ENCODE measurements at regions of chr14 and their contacts with region 1.

Region 1: DNA sequence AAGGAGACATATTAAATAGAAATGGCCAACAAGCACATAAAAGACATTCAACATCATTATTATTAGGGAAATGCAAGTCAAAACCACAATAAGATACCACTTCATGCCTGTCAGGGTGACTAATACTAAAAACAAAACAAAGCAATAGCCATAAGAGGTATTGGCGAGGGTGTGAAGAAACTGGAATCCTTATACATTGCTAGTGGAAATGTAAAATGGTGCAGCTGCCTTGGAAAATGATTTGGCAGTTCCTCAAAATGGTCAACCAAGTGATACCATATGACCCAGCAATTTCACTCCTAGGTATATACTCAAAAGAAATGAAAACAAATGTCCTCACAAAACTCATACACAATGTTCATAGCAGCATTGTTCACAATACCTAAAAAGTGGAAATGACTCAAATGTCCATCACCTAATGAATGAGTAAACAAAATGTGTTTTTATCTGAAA is 27.0 kb downstream of the GPR135 start:
- DNase-seq: no peak
- ATAC-seq: peak; percentile 50
- H3K4me3 ChIP-seq: no peak overlapping the region
- H3K27ac ChIP-seq: no peak overlapping the region
- H3K4me1 ChIP-seq: no peaks in the 10 kb centered on the region
- H3K27me3 ChIP-seq: no peaks in the 10 kb centered on the region
- CTCF ChIP-seq: no peak
- EP300 ChIP-seq: no peak
- POLR2A ChIP-seq: no peak
- RAD21 ChIP-seq: no peak

Region 2: GRCh38 chr14:58690801-58691516 is 747.3 kb before region 1 on chr14:
- CTCF ChIA-PET with region 1: no interaction called
- POLR2A ChIA-PET with region 1: no interaction called
- RAD21 ChIA-PET with region 1: no interaction called
- SMC1A ChIA-PET with region 1: no interaction called
- in situ Hi-C with region 1: no loop called
- intact Hi-C with region 1: no loop called
- DNase-seq: no peak
- ATAC-seq: no peak
- H3K4me3 ChIP-seq: no peak overlapping the region
- H3K27ac ChIP-seq: no peak overlapping the region
- H3K4me1 ChIP-seq: no peaks in the 10 kb centered on the region
- H3K27me3 ChIP-seq: no peaks in the 10 kb centered on the region
- CTCF ChIP-seq: no peak
- EP300 ChIP-seq: no peak
- POLR2A ChIP-seq: no peak
- RAD21 ChIP-seq: no peak

Region 3: GRCh38 chr14:59116984-59117415 is 321.2 kb before region 1 on chr14:
- CTCF ChIA-PET with region 1: interaction called, 17 read pairs
- POLR2A ChIA-PET with region 1: no interaction called
- RAD21 ChIA-PET with region 1: interaction called, 3 read pairs
- SMC1A ChIA-PET with region 1: interaction called, 104 read pairs
- in situ Hi-C with region 1: no loop called
- intact Hi-C with region 1: no loop called
- DNase-seq: peak; percentile 44
- ATAC-seq: peak; percentile 95
- H3K4me3 ChIP-seq: no peak overlapping the region
- H3K27ac ChIP-seq: no peak overlapping the region
- H3K4me1 ChIP-seq: no peaks in the 10 kb centered on the region
- H3K27me3 ChIP-seq: no peaks in the 10 kb centered on the region; a peak in 1 of 4 replicates
- CTCF ChIP-seq: no peak
- EP300 ChIP-seq: peak; percentile 18 to 79; a peak in 3 of 4 replicates
- POLR2A ChIP-seq: no peak
- RAD21 ChIP-seq: no peak

Region 4: GRCh38 chr14:59132796-59133494 is 305.3 kb before region 1 on chr14:
- CTCF ChIA-PET with region 1: interaction called, 58 read pairs
- POLR2A ChIA-PET with region 1: interaction called, 3 read pairs
- RAD21 ChIA-PET with region 1: interaction called, 52 read pairs
- SMC1A ChIA-PET with region 1: interaction called, 55 read pairs
- in situ Hi-C with region 1: loop called (anchors 5 kb)
- intact Hi-C with region 1: no loop called
- DNase-seq: no peak
- ATAC-seq: no peak
- H3K4me3 ChIP-seq: no peak overlapping the region
- H3K27ac ChIP-seq: no peak overlapping the region
- H3K4me1 ChIP-seq: no peaks in the 10 kb centered on the region
- H3K27me3 ChIP-seq: no peaks in the 10 kb centered on the region
- CTCF ChIP-seq: peak in 1 of 3 experiments; percentile 14; a peak in 1 of 6 replicates
- EP300 ChIP-seq: no peak
- POLR2A ChIP-seq: no peak
- RAD21 ChIP-seq: no peak

Region 5: DNA sequence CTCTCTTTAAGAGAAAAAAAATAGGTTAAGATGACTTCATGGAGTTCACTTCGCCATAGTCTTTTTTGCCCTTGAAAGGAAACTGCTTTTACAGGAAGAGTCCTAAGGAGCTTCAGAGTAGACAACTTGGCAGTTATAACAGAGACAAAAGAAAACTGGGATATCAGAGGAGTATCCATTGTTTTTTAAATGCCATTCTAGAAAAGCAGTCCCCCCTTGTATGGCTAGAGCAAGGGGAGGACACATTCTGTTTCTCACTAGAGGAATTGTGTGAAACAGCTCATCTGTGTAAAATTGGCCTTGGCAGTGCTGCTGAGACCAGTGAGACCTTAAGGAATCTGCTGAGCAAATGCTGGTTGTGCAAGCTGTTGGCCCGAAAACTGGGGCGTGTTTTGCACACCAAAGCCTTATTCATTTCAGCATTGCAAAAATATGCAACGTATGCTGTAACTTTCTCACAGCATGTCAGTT is 101.0 kb before region 1 on chr14:
- CTCF ChIA-PET with region 1: no interaction called
- POLR2A ChIA-PET with region 1: no interaction called
- RAD21 ChIA-PET with region 1: no interaction called
- SMC1A ChIA-PET with region 1: no interaction called
- in situ Hi-C with region 1: no loop called
- intact Hi-C with region 1: loop called (anchors 5 kb)
- DNase-seq: no peak
- ATAC-seq: no peak
- H3K4me3 ChIP-seq: no peak overlapping the region
- H3K27ac ChIP-seq: no peak overlapping the region
- H3K4me1 ChIP-seq: no peaks in the 10 kb centered on the region
- H3K27me3 ChIP-seq: no peaks in the 10 kb centered on the region
- CTCF ChIP-seq: no peak
- EP300 ChIP-seq: no peak
- POLR2A ChIP-seq: no peak
- RAD21 ChIP-seq: no peak

Region 6: GRCh38 chr14:59398841-59399240 is 39.4 kb before region 1 on chr14:
- CTCF ChIA-PET with region 1: no interaction called
- POLR2A ChIA-PET with region 1: no interaction called
- RAD21 ChIA-PET with region 1: no interaction called
- SMC1A ChIA-PET with region 1: no interaction called
- in situ Hi-C with region 1: no loop called
- intact Hi-C with region 1: no loop called
- DNase-seq: no peak
- ATAC-seq: no peak
- H3K4me3 ChIP-seq: no peak overlapping the region
- H3K27ac ChIP-seq: no peak overlapping the region
- H3K4me1 ChIP-seq: no peaks in the 10 kb centered on the region
- H3K27me3 ChIP-seq: no peaks in the 10 kb centered on the region
- CTCF ChIP-seq: no peak
- EP300 ChIP-seq: no peak
- POLR2A ChIP-seq: no peak
- RAD21 ChIP-seq: no peak

Region 7: GRCh38 chr14:59422069-59422881 is 15.9 kb before region 1 on chr14:
- CTCF ChIA-PET with region 1: interaction called, 19 read pairs
- POLR2A ChIA-PET with region 1: no interaction called
- RAD21 ChIA-PET with region 1: interaction called, 4 read pairs
- SMC1A ChIA-PET with region 1: interaction called, 6 read pairs
- in situ Hi-C with region 1: no loop called
- intact Hi-C with region 1: no loop called
- DNase-seq: no peak
- ATAC-seq: peak; percentile 75
- H3K4me3 ChIP-seq: no peak overlapping the region
- H3K27ac ChIP-seq: no peak overlapping the region
- H3K4me1 ChIP-seq: peaks cover 5% of the 10 kb centered on the region; the same call in 1 of the 2 replicates
- H3K27me3 ChIP-seq: no peaks in the 10 kb centered on the region
- CTCF ChIP-seq: peak in 2 of 3 experiments; percentile 13 to 43; a peak in 3 of 6 replicates
- EP300 ChIP-seq: no peak
- POLR2A ChIP-seq: no peak
- RAD21 ChIP-seq: peak; percentile 56

Region 8: GRCh38 chr14:59576332-59577294 is 138.4 kb after region 1 on chr14 and contains the start of gene CCDC175:
- CTCF ChIA-PET with region 1: interaction called, 3 read pairs
- POLR2A ChIA-PET with region 1: no interaction called
- RAD21 ChIA-PET with region 1: no interaction called
- SMC1A ChIA-PET with region 1: no interaction called
- in situ Hi-C with region 1: no loop called
- intact Hi-C with region 1: loop called (anchors 5 kb)
- DNase-seq: peak; percentile 7
- ATAC-seq: peak; percentile 99
- H3K4me3 ChIP-seq: peak within 1 kb of the TSS; percentile 52; the same call in 1 of the 2 replicates
- H3K27ac ChIP-seq: no peak within 1 kb of the TSS
- H3K4me1 ChIP-seq: no peaks in the 10 kb centered on the region; the same call in 1 of the 2 replicates
- H3K27me3 ChIP-seq: peaks cover 0 to 5% of the 10 kb centered on the region in 2 experiments; a peak in 3 of 4 replicates
- CTCF ChIP-seq: peak; percentile 80 to 88 (median 85)
- EP300 ChIP-seq: no peak
- POLR2A ChIP-seq: no peak
- RAD21 ChIP-seq: peak; percentile 75
- polyA plus RNA-seq, gene CCDC175: not detected

Region 9: GRCh38 chr14:59688224-59689170 is 250.3 kb after region 1 on chr14:
- CTCF ChIA-PET with region 1: no interaction called
- POLR2A ChIA-PET with region 1: no interaction called
- RAD21 ChIA-PET with region 1: no interaction called
- SMC1A ChIA-PET with region 1: no interaction called
- in situ Hi-C with region 1: no loop called
- intact Hi-C with region 1: no loop called
- DNase-seq: no peak
- ATAC-seq: peak; percentile 99
- H3K4me3 ChIP-seq: no peak overlapping the region
- H3K27ac ChIP-seq: no peak overlapping the region
- H3K4me1 ChIP-seq: no peaks in the 10 kb centered on the region
- H3K27me3 ChIP-seq: no peaks in the 10 kb centered on the region
- CTCF ChIP-seq: peak; percentile 64 to 84 (median 81)
- EP300 ChIP-seq: no peak
- POLR2A ChIP-seq: no peak
- RAD21 ChIP-seq: peak; percentile 60

Measured in GM12878 (cell line).